HEK293 (cell line): ENCODE measurements at regions of chr1 and their contacts with region 1.

Region 1: GRCh38 chr1:91500756-91501522 is at the start of gene CDC7:
- H3K4me3 ChIP-seq: peak within 1 kb of the TSS; percentile 80
- H3K27ac ChIP-seq: peak within 1 kb of the TSS; percentile 94
- H3K4me1 ChIP-seq: no peaks in the 10 kb centered on the region
- CTCF ChIP-seq: no peak; the same call in 1 of the 2 replicates

Region 2: GRCh38 chr1:91234181-91234580 is 266.8 kb before region 1 on chr1:
- CTCF ChIA-PET with region 1: no interaction called
- POLR2A ChIA-PET with region 1: no interaction called
- H3K4me3 ChIP-seq: no peak overlapping the region
- H3K27ac ChIP-seq: no peak overlapping the region
- H3K4me1 ChIP-seq: no peaks in the 10 kb centered on the region
- CTCF ChIP-seq: no peak

Region 3: GRCh38 chr1:91404151-91405012 is 96.6 kb before region 1 on chr1 and contains the start of gene HFM1:
- CTCF ChIA-PET with region 1: interaction called, 3 read pairs
- POLR2A ChIA-PET with region 1: interaction called, 16 read pairs
- H3K4me3 ChIP-seq: peak within 1 kb of the TSS; percentile 75
- H3K27ac ChIP-seq: peak within 1 kb of the TSS; percentile 86
- H3K4me1 ChIP-seq: 0 out of 2 replicates have a peak, but pooled peaks cover 3% of the 10 kb centered on the region
- CTCF ChIP-seq: peak; percentile 82

Region 4: DNA sequence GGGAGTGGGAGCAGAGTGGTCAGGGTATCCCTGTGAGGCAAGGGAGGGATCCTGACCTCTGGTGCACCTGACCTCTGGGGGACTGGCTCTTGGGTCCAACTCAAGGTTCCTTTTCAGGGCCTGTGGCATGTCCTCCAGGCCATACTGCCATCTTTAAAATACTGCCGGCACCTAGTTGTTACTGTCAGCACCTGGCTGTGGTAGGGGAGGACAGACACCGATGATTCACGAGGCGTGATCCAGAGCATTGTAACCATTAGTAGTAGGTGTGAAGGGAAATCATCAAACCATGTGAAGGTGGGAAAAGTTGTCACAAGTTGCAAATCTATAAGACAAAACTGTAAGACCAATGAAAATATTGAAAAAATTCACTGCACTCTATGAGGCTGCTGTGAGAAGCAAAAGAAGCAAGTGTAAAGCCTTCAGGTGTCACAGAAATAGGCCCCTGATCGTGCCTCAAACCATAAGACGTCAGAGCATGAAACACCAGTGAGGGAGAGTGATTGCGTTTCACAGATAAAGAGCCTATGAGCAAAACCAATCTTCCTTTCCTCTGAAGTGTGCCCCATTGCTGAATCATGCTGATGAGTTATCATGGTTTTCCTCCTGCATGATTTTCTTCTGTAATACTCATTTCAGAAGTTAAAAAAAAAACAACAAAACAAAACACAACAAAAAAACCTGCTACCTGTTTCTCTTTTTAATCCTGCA is 55.0 kb after region 1 on chr1:
- CTCF ChIA-PET with region 1: no interaction called
- POLR2A ChIA-PET with region 1: no interaction called
- H3K4me3 ChIP-seq: no peak overlapping the region
- H3K27ac ChIP-seq: no peak overlapping the region
- H3K4me1 ChIP-seq: no peaks in the 10 kb centered on the region
- CTCF ChIP-seq: no peak

Region 5: DNA sequence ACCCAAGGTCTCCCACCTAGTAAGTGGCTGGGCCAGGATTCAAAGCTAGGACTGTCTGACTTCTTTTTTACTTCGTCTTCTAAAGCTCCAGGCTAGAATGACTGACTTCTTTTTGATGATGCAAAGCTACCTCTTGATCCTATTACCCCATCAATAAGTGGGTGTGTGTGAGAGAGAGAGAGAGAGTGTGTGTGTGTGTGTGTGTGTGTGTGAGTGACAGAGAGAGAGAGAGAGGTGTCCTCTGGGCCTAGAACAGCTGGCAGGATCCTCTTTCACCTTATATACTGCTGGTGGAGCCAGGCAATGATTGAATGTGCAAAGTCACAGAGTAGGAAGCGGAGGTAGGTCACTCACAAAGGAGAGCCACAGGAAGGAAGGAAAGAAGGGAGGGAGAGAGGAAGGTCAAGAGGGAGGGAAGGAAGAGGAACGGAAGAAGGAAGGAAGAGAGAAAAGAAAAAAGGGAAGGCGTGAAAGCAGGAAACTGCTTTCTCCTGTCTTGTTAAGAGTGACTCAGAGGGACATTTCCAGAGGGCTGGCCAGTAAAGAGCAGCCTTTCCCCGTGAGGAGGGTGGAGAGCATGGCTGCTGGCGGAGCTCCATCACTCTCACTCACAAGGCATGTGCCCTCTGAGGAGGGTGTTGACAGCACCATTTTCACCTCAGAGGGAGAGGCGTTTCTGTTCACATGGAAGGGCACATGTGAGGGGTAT is 68.6 kb after region 1 on chr1:
- CTCF ChIA-PET with region 1: no interaction called
- POLR2A ChIA-PET with region 1: no interaction called
- H3K4me3 ChIP-seq: no peak overlapping the region
- H3K27ac ChIP-seq: no peak overlapping the region
- H3K4me1 ChIP-seq: no peaks in the 10 kb centered on the region
- CTCF ChIP-seq: no peak

Region 6: DNA sequence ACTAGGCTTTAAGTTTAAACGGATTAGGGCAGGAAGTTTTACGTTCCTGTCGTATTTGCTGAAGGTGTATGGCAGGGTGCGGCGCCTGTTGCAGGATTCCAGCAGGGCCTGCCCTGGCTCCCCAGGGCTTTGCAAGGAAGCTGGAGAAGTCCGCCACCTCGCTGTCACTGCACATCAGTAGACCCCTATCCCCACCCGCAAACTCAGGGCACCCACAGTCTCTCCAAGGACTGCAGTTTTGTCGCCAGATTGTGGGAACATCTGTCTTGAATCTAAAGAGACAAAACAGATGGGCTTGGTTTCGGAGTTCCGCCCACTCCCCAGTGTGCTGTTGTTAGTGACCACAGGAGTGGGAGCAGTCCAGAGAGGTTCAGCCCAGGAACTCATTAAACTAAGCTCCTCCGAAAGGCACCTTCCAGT is 110.6 kb after region 1 on chr1:
- CTCF ChIA-PET with region 1: no interaction called
- POLR2A ChIA-PET with region 1: no interaction called
- H3K4me3 ChIP-seq: no peak overlapping the region
- H3K27ac ChIP-seq: no peak overlapping the region
- H3K4me1 ChIP-seq: no peaks in the 10 kb centered on the region
- CTCF ChIP-seq: no peak